ENCODE measurements at regions of chr5 and their contacts with region 1.

Region 1: GRCh38 chr5:164358531-164359259 is 853.3 kb downstream of the MAT2B start:
- DNase-seq: no peak
- H3K4me3 ChIP-seq: no peak overlapping the region
- H3K27ac ChIP-seq: no peak overlapping the region
- H3K4me1 ChIP-seq: no peaks in the 10 kb centered on the region
- H3K27me3 ChIP-seq: no peaks in the 10 kb centered on the region
- CTCF ChIP-seq: no peak
- POLR2A ChIP-seq: no peak

Region 2: GRCh38 chr5:162637481-162637880 is 1721.2 kb before region 1 on chr5:
- intact Hi-C with region 1: loop called (anchors 5 kb)
- DNase-seq: no peak
- H3K4me3 ChIP-seq: no peak overlapping the region
- H3K27ac ChIP-seq: no peak overlapping the region
- H3K4me1 ChIP-seq: no peaks in the 10 kb centered on the region
- H3K27me3 ChIP-seq: no peaks in the 10 kb centered on the region
- CTCF ChIP-seq: no peak
- POLR2A ChIP-seq: no peak

Region 3: GRCh38 chr5:164475339-164475977 is 116.8 kb after region 1 on chr5:
- intact Hi-C with region 1: no loop called
- DNase-seq: no peak
- H3K4me3 ChIP-seq: no peak overlapping the region
- H3K27ac ChIP-seq: no peak overlapping the region
- H3K4me1 ChIP-seq: no peaks in the 10 kb centered on the region
- H3K27me3 ChIP-seq: no peaks in the 10 kb centered on the region
- CTCF ChIP-seq: no peak
- POLR2A ChIP-seq: no peak